ENCODE measurements at regions of chr4 and their contacts with region 1.

Region 1: GRCh38 chr4:84503495-84504437 is 4.7 kb upstream of the NKX6-1 start:
- DNase-seq: no peak
- H3K4me3 ChIP-seq: no peak overlapping the region
- H3K27ac ChIP-seq: no peak overlapping the region
- H3K4me1 ChIP-seq: peaks cover 0 to 16% (median 11%) of the 10 kb centered on the region in 4 donors
- H3K27me3 ChIP-seq: peaks cover 100% of the 10 kb centered on the region
- CTCF ChIP-seq: peak; percentile 53 to 61 (median 56)
- EP300 ChIP-seq: no peak
- POLR2A ChIP-seq: no peak

Region 2: GRCh38 chr4:82989575-82990429 is 1514.0 kb before region 1 on chr4:
- in situ Hi-C with region 1: no loop called
- intact Hi-C with region 1: no loop called
- DNase-seq: no peak
- H3K4me3 ChIP-seq: peak overlapping the region in 1 of 4 donors; percentile 4
- H3K27ac ChIP-seq: no peak overlapping the region
- H3K4me1 ChIP-seq: peaks cover 0 to 17% (median 4%) of the 10 kb centered on the region in 4 donors
- H3K27me3 ChIP-seq: no peaks in the 10 kb centered on the region
- CTCF ChIP-seq: no peak
- EP300 ChIP-seq: no peak
- POLR2A ChIP-seq: no peak

Region 3: DNA sequence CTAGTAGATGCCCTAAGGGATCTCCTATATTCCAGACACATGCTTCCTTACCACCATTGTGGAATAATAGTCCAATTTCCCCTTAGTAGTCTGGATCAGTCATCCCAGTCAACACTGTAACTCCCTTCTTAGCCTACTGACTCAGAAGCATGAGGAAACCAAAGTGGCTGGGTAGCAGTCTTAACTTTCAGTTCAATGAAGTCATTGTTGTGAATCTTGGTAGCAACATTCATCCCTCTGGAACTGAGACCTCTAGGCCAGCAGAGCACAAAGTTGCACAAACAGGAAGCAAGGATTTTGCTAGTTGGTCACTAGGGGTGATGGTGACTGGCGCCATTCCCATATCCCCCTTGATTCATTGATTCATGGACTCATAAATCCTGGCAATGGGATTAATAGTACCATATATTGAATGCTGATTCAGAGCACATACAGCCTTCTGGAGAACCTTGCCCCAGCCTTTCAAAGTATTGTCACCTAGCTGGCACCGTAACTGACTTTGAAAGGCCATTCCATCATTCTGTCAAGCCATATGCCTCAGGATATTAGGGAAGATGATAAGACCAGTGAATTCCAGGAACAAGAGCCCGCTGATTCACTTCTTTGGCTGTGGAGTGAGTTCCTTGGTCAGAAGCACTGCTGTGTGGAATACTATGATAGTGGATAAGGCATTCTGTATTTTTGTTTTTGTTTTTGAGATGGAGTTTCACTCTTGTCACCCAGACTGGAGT is 987.6 kb before region 1 on chr4:
- in situ Hi-C with region 1: loop called in 3 of 4 experiments (anchors 25 kb)
- intact Hi-C with region 1: no loop called
- DNase-seq: no peak
- H3K4me3 ChIP-seq: no peak overlapping the region
- H3K27ac ChIP-seq: no peak overlapping the region
- H3K4me1 ChIP-seq: no peaks in the 10 kb centered on the region
- H3K27me3 ChIP-seq: no peaks in the 10 kb centered on the region
- CTCF ChIP-seq: no peak
- EP300 ChIP-seq: no peak
- POLR2A ChIP-seq: no peak

Region 4: GRCh38 chr4:83639849-83640493 is 863.8 kb before region 1 on chr4:
- in situ Hi-C with region 1: loop called in 1 of 4 experiments (anchors 25 kb)
- intact Hi-C with region 1: no loop called
- DNase-seq: peak; percentile 53
- H3K4me3 ChIP-seq: no peak overlapping the region
- H3K27ac ChIP-seq: no peak overlapping the region
- H3K4me1 ChIP-seq: peaks cover 0 to 8% (median 0%) of the 10 kb centered on the region in 4 donors
- H3K27me3 ChIP-seq: peaks cover 16% of the 10 kb centered on the region
- CTCF ChIP-seq: peak; percentile 79 to 89 (median 82)
- EP300 ChIP-seq: no peak
- POLR2A ChIP-seq: no peak

Region 5: GRCh38 chr4:83658806-83659495 is 844.8 kb before region 1 on chr4:
- in situ Hi-C with region 1: loop called in 2 of 4 experiments (anchors 25 kb)
- intact Hi-C with region 1: no loop called
- DNase-seq: no peak
- H3K4me3 ChIP-seq: no peak overlapping the region
- H3K27ac ChIP-seq: no peak overlapping the region
- H3K4me1 ChIP-seq: no peaks in the 10 kb centered on the region
- H3K27me3 ChIP-seq: no peaks in the 10 kb centered on the region
- CTCF ChIP-seq: no peak
- EP300 ChIP-seq: no peak
- POLR2A ChIP-seq: no peak

Region 6: DNA sequence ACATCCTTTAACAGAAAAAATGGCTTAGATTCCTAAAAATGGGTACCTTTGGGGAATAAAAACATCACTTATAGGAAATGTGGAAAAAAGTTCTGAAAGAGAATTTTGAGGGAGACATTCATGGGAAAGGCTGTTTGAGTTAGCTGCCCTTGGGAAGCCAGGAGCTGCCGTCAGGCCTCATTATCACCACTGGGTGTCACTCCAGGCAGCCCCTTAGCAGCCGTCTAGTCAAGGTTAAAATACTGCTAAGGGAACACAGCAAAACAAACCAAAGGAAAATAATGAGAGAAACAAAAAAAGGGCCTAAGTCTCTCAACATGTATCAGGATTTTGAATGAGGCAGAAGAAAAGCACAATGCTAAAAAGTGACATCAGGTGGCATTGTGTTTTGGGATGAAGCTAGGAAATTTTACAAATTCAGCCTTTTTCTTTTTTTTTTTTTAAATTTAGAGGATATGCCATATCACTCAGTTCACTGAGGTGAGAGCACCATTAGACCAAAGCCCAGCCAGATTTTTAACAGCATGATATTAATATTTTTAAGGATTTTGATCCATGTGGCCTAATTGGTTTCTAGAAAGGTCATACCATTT is 732.6 kb before region 1 on chr4:
- in situ Hi-C with region 1: loop called in 1 of 4 experiments (anchors 25 kb)
- intact Hi-C with region 1: no loop called
- DNase-seq: peak; percentile 7
- H3K4me3 ChIP-seq: no peak overlapping the region
- H3K27ac ChIP-seq: no peak overlapping the region
- H3K4me1 ChIP-seq: no peaks in the 10 kb centered on the region
- H3K27me3 ChIP-seq: no peaks in the 10 kb centered on the region
- CTCF ChIP-seq: peak in 4 of 5 experiments; percentile 27 to 40 (median 34)
- EP300 ChIP-seq: no peak
- POLR2A ChIP-seq: no peak

Region 7: GRCh38 chr4:83974156-83974780 is 529.5 kb before region 1 on chr4:
- in situ Hi-C with region 1: no loop called
- intact Hi-C with region 1: no loop called
- DNase-seq: no peak
- H3K4me3 ChIP-seq: no peak overlapping the region
- H3K27ac ChIP-seq: no peak overlapping the region
- H3K4me1 ChIP-seq: no peaks in the 10 kb centered on the region
- H3K27me3 ChIP-seq: no peaks in the 10 kb centered on the region
- CTCF ChIP-seq: no peak
- EP300 ChIP-seq: no peak
- POLR2A ChIP-seq: no peak

Region 8: DNA sequence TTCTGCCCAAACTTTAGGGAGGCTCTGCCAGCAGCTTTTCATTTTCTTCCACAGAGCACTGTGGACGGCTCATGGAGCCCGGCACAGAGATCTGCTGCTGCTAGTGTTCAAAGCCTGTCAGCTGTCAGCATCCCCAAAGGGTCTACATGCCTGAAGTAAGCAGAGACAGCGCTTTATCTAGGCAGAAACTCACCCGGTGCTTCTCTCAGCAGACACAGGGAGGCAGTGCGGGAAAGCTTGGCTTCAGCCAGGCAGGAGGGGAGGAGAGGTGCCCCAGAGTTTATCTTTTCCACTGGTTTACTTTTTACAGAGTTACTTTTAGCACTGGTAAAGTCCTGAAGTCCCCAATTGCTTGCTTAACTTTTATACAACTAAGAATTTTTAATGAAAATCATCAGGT is 344.0 kb before region 1 on chr4:
- in situ Hi-C with region 1: loop called in 1 of 4 experiments (anchors 25 kb)
- intact Hi-C with region 1: no loop called
- DNase-seq: no peak
- H3K4me3 ChIP-seq: no peak overlapping the region
- H3K27ac ChIP-seq: no peak overlapping the region
- H3K4me1 ChIP-seq: no peaks in the 10 kb centered on the region
- H3K27me3 ChIP-seq: peaks cover 9% of the 10 kb centered on the region
- CTCF ChIP-seq: no peak
- EP300 ChIP-seq: no peak
- POLR2A ChIP-seq: no peak